ENCODE measurements at regions of chr7 and their contacts with region 1.

Region 1: DNA sequence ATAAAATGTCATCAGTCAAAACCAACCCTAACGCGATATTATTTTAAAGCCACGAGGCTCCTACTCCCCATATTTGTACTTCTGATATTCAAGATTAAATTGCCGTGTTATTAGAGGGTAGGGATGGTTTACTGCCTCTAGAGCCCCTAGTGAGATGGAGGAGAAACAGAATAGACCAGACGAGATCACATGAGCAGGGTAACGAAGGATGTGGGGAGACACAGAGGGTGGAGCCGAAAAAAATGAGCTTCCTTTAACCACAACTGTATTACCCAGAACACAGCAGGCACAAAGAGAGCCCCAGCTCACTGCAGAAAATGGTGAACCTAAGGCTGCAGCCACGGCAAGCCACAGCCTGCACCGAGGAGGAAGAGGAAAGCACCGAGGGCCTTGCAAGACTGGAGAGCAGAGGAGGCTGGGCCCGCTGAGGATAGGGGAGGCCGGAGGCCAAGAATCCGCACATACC is 14.3 kb downstream of the ZC3HAV1 start:
- DNase-seq: peak; percentile 59 to 94 (median 80)
- ATAC-seq: peak; percentile 90 to 91 (median 90)
- H3K4me3 ChIP-seq: peak overlapping the region; percentile 52
- H3K4me3 Mint-ChIP-seq: peak overlapping the region; percentile 77 to 87 (median 80)
- H3K27ac ChIP-seq: peak overlapping the region; percentile 81
- H3K27ac Mint-ChIP-seq: peak overlapping the region; percentile 92 to 95
- H3K4me1 ChIP-seq: peaks cover 70 to 83% of the 10 kb centered on the region in 2 experiments
- H3K4me1 Mint-ChIP-seq: peaks cover 85 to 96% (median 93%) of the 10 kb centered on the region in 3 donors
- H3K27me3 ChIP-seq: no peaks in the 10 kb centered on the region
- H3K27me3 Mint-ChIP-seq: no peaks in the 10 kb centered on the region

Region 2: DNA sequence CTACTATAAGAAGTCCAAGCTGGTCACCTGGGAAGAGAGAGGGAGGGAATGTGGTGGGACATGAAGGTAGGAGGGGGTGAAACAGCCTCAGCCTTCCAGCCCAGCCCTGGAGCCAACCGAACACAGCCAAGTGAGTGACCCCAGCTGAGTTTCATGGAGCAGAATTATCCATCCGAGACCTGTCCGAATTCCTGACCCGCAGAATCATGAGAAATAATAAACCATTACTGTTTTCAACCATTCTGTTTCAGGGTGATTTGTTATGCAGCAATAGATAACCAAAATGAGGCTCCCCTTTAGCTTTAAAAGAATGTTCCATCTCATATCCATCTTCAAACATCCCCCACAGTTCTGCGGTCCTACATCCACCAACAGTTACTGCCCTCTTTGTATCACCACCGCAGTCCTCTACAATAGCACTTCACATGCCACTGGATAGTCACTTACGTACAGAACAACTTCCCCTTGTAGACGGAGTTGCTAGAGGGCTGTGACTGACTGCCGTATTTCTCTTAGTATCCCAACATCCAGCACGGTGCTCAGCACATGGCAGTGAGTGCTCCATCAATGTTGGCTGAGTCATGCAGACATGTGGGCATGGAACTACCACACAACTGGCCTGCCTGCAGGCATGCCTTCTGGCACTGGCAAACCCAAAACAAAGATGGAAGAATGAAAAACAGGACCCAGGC is 132.5 kb before region 1 on chr7:
- CTCF ChIA-PET with region 1: interaction called in 1 of 2 experiments, 10 read pairs
- POLR2A ChIA-PET with region 1: no interaction called
- DNase-seq: no peak
- ATAC-seq: no peak
- H3K4me3 ChIP-seq: no peak overlapping the region
- H3K4me3 Mint-ChIP-seq: no peak overlapping the region
- H3K27ac ChIP-seq: no peak overlapping the region
- H3K27ac Mint-ChIP-seq: no peak overlapping the region
- H3K4me1 ChIP-seq: no peaks in the 10 kb centered on the region
- H3K4me1 Mint-ChIP-seq: peaks cover 4 to 15% (median 5%) of the 10 kb centered on the region in 3 donors
- H3K27me3 ChIP-seq: peaks cover 0 to 10% of the 10 kb centered on the region in 2 experiments
- H3K27me3 Mint-ChIP-seq: peaks cover 3 to 4% of the 10 kb centered on the region in 2 donors

Region 3: DNA sequence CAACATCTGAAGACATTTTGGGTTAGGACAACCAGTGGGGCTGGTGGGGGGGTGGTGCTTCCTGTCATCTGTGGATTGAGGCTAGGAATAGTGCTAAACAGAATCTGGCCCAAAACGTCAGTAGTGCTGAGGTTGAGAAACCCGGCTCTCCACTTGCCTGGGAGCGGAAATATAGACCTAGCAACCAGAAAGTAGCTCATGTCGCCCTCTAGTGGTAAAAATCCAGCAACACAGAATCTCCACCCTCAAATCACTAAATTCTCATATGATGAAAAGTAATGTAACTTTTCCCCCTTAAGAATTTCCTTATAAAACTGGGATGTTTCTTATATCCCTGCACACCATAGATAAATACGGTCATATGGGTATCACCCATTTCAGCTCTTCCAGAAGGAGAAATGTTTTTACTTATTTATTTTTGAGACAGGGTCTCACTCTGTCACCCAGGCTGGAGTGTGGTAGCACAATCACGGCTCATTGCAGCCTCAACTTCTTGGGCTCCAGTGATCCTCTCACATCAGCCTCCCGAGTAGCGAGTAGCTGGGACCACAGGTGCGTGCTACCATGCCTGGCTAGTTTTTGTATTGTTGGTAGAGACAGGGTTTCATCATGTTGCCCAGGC is 20.1 kb before region 1 on chr7:
- CTCF ChIA-PET with region 1: interaction called, 9 to 43 read pairs
- POLR2A ChIA-PET with region 1: interaction called, 12 to 25 read pairs
- DNase-seq: peak; percentile 30 to 91 (median 65)
- ATAC-seq: peak; percentile 82 to 86 (median 84)
- H3K4me3 ChIP-seq: no peak overlapping the region
- H3K4me3 Mint-ChIP-seq: peak overlapping the region; percentile 30 to 60 (median 41)
- H3K27ac ChIP-seq: peak overlapping the region; percentile 67
- H3K27ac Mint-ChIP-seq: peak overlapping the region; percentile 82 to 88
- H3K4me1 ChIP-seq: peaks cover 36 to 54% of the 10 kb centered on the region in 2 experiments
- H3K4me1 Mint-ChIP-seq: peaks cover 67 to 74% (median 73%) of the 10 kb centered on the region in 3 donors
- H3K27me3 ChIP-seq: no peaks in the 10 kb centered on the region
- H3K27me3 Mint-ChIP-seq: no peaks in the 10 kb centered on the region

Region 4: GRCh38 chr7:139109188-139109982 is 14.2 kb after region 1 on chr7 and contains the start of gene ZC3HAV1:
- CTCF ChIA-PET with region 1: interaction called, 9 to 52 read pairs
- POLR2A ChIA-PET with region 1: interaction called, 17 to 81 read pairs
- DNase-seq: peak; percentile 66 to 95 (median 89)
- ATAC-seq: peak; percentile 85 to 89 (median 86)
- H3K4me3 ChIP-seq: peak within 1 kb of the TSS; percentile 88 to 100
- H3K4me3 Mint-ChIP-seq: peak within 1 kb of the TSS; percentile 98 to 99 (median 98)
- H3K27ac ChIP-seq: peak within 1 kb of the TSS; percentile 93
- H3K27ac Mint-ChIP-seq: peak within 1 kb of the TSS; percentile 98
- H3K4me1 ChIP-seq: peaks cover 4 to 18% of the 10 kb centered on the region in 2 experiments
- H3K4me1 Mint-ChIP-seq: peaks cover 36 to 46% (median 45%) of the 10 kb centered on the region in 3 donors
- H3K27me3 ChIP-seq: no peaks in the 10 kb centered on the region
- H3K27me3 Mint-ChIP-seq: no peaks in the 10 kb centered on the region
- total RNA-seq, gene ZC3HAV1: 148 to 201 (median 155) TPM

Region 5: DNA sequence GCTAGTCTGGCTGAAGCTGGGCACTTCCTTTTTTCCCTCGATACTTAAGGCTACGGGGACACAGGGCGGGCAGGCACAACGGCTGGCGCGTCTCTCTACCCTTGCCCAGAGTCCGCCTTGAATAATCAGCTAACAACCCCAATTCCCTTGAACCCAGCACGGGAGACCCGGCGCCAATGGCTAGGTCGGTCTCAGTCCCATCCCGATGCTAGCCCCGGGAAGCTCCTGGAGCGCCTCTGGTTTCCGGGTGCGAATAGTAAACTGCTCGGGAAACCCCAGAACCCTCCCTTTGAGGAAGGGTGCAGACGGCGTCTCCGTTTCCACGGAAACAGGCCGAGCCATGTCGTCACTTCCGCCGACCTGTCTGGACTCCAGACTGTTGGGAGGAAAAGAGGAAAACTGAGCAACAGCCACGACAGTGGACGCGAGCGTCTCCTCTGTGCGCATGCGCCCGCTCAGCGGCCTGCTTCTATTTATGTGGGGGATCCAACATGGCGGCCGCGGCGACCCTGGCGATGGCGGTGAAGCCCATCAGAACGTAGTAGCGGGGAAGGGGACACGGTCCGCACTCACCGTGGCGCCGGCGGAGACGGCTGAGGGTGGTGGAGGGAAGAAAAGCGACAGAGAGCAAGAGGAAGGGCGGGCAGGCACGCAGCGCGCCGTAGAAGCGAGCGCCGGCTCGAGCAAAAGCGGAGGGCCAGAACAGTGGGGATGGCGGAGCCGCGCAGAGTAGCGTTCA is 135.7 kb after region 1 on chr7 and contains the start of gene UBN2:
- CTCF ChIA-PET with region 1: interaction called in 1 of 2 experiments, 16 read pairs
- POLR2A ChIA-PET with region 1: no interaction called
- DNase-seq: peak; percentile 63 to 94 (median 74)
- ATAC-seq: peak; percentile 77 to 85 (median 83)
- H3K4me3 ChIP-seq: peak within 1 kb of the TSS; percentile 78 to 93
- H3K4me3 Mint-ChIP-seq: peak within 1 kb of the TSS; percentile 99 to 100 (median 100)
- H3K27ac ChIP-seq: peak within 1 kb of the TSS; percentile 72
- H3K27ac Mint-ChIP-seq: peak within 1 kb of the TSS; percentile 92 to 95
- H3K4me1 ChIP-seq: peaks cover 15 to 17% of the 10 kb centered on the region in 2 experiments
- H3K4me1 Mint-ChIP-seq: peaks cover 33 to 39% (median 35%) of the 10 kb centered on the region in 3 donors
- H3K27me3 ChIP-seq: peaks cover 0 to 5% of the 10 kb centered on the region in 2 experiments
- H3K27me3 Mint-ChIP-seq: peaks cover 0 to 4% of the 10 kb centered on the region in 2 donors
- total RNA-seq, gene UBN2: 16.1 to 21.7 (median 17.7) TPM

Measured in T-cell (primary cell).